CD4-positive, alpha-beta T cell (primary cell): ENCODE measurements at regions of chr4 and their contacts with region 1.

Region 1: GRCh38 chr4:140359562-140360427 is 13.7 kb upstream of the SCOC start:
- DNase-seq: peak; percentile 57 to 89 (median 71)
- ATAC-seq: peak; percentile 94
- H3K4me3 ChIP-seq: no peak overlapping the region
- H3K4me3 Mint-ChIP-seq: no peak overlapping the region
- H3K27ac ChIP-seq: no peak overlapping the region
- H3K27ac Mint-ChIP-seq: no peak overlapping the region
- H3K4me1 ChIP-seq: no peaks in the 10 kb centered on the region
- H3K4me1 Mint-ChIP-seq: no peaks in the 10 kb centered on the region
- H3K27me3 ChIP-seq: no peaks in the 10 kb centered on the region
- H3K27me3 Mint-ChIP-seq: no peaks in the 10 kb centered on the region
- CTCF ChIP-seq: peak; percentile 98

Region 2: DNA sequence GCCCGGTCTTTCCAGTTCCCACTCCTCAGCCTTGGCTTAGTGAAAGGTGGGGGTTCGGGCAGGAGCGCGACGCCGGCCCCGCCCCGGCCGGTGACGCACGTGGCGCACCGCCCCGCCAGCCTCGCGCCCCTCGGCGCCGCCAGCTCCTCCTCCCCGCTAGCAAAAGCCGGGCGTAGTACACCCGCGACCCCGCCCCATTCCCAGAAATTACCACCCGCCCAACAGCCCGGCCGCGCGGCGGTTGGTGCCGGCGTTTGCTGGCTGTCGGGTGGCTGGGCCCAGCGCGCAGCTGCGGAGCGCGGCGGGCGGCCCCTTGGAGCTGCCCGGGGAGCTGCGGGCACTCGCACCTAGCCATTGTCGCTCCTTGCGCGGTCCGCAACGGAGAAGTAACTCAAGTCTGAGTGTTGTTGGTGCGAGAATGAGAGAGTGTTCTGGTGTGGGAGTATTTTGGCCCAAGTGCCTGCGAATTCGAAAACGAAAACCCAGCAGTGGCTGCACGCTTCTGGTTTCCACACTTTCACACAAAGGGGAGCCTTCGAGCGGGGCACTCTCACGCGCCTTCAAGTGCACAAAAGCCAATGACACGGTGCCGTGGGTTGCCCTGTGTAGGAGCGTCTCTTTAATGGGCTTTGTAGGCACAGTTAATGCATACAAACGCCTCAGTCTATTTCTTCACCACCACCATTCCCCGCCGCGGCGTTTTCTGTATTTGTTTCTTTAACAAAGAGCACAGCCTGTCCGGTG is 1181.8 kb before region 1 on chr4:
- CTCF ChIA-PET with region 1: no interaction called
- POLR2A ChIA-PET with region 1: no interaction called
- intact Hi-C with region 1: loop called in 1 of 2 experiments (anchors 10 kb)
- DNase-seq: peak; percentile 80 to 96 (median 90)
- ATAC-seq: peak; percentile 74
- H3K4me3 ChIP-seq: peak overlapping the region; percentile 85
- H3K4me3 Mint-ChIP-seq: peak overlapping the region; percentile 96
- H3K27ac ChIP-seq: peak overlapping the region; percentile 77 to 88
- H3K27ac Mint-ChIP-seq: peak overlapping the region; percentile 93
- H3K4me1 ChIP-seq: peaks cover 18% of the 10 kb centered on the region
- H3K4me1 Mint-ChIP-seq: peaks cover 26% of the 10 kb centered on the region
- H3K27me3 ChIP-seq: no peaks in the 10 kb centered on the region
- H3K27me3 Mint-ChIP-seq: no peaks in the 10 kb centered on the region
- CTCF ChIP-seq: no peak

Region 3: DNA sequence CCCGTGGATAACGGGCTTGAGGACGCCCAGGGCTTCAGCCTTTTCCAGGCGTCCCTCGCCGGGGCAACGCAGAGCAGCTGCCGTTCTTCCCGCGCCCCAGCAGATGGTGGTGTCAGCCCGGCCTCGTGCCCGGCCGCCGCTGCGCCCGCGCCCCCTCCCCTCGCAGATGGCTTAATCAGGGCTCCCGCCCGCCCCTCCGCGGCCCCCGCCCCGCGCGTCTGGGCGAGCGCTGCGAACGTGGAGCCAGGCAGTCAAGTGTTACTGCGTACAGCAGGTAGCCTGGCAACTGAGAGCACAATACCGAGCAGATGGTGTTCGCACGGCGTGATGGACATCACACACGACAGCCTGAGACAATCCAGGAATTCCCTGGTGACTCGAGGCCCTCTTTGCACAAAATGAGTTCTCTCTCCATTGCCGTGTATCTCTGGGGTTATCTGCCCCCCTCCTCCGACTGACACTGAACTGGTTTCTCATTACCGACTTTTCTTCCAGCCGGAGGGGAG is 624.9 kb before region 1 on chr4:
- CTCF ChIA-PET with region 1: no interaction called
- POLR2A ChIA-PET with region 1: no interaction called
- intact Hi-C with region 1: loop called in 1 of 2 experiments (anchors 10 kb)
- DNase-seq: peak; percentile 6 to 78 (median 40)
- ATAC-seq: peak; percentile 83
- H3K4me3 ChIP-seq: peak overlapping the region; percentile 44
- H3K4me3 Mint-ChIP-seq: peak overlapping the region; percentile 69
- H3K27ac ChIP-seq: no peak overlapping the region
- H3K27ac Mint-ChIP-seq: no peak overlapping the region
- H3K4me1 ChIP-seq: peaks cover 13% of the 10 kb centered on the region
- H3K4me1 Mint-ChIP-seq: peaks cover 14% of the 10 kb centered on the region
- H3K27me3 ChIP-seq: peaks cover 12 to 35% of the 10 kb centered on the region in 2 experiments
- H3K27me3 Mint-ChIP-seq: peaks cover 53% of the 10 kb centered on the region
- CTCF ChIP-seq: peak; percentile 51

Region 4: GRCh38 chr4:140373328-140374129 is 13.7 kb after region 1 on chr4 and contains the start of gene SCOC:
- CTCF ChIA-PET with region 1: interaction called, 41 read pairs
- POLR2A ChIA-PET with region 1: interaction called, 24 read pairs
- intact Hi-C with region 1: no loop called
- DNase-seq: peak; percentile 90 to 98 (median 94)
- ATAC-seq: peak; percentile 95
- H3K4me3 ChIP-seq: peak within 1 kb of the TSS; percentile 94
- H3K4me3 Mint-ChIP-seq: peak within 1 kb of the TSS; percentile 87
- H3K27ac ChIP-seq: peak within 1 kb of the TSS; percentile 65 to 83
- H3K27ac Mint-ChIP-seq: no peak within 1 kb of the TSS
- H3K4me1 ChIP-seq: peaks cover 14% of the 10 kb centered on the region
- H3K4me1 Mint-ChIP-seq: peaks cover 32% of the 10 kb centered on the region
- H3K27me3 ChIP-seq: no peaks in the 10 kb centered on the region
- H3K27me3 Mint-ChIP-seq: no peaks in the 10 kb centered on the region
- CTCF ChIP-seq: no peak
- total RNA-seq, gene SCOC: 5.9 to 6.8 TPM

Region 5: GRCh38 chr4:140609548-140610425 is 250.0 kb after region 1 on chr4:
- CTCF ChIA-PET with region 1: no interaction called
- POLR2A ChIA-PET with region 1: no interaction called
- intact Hi-C with region 1: loop called in 1 of 2 experiments (anchors 2 kb)
- DNase-seq: peak in 3 of 14 experiments; percentile 24 to 43 (median 32)
- ATAC-seq: no peak
- H3K4me3 ChIP-seq: no peak overlapping the region
- H3K4me3 Mint-ChIP-seq: no peak overlapping the region
- H3K27ac ChIP-seq: no peak overlapping the region
- H3K27ac Mint-ChIP-seq: no peak overlapping the region
- H3K4me1 ChIP-seq: no peaks in the 10 kb centered on the region
- H3K4me1 Mint-ChIP-seq: no peaks in the 10 kb centered on the region
- H3K27me3 ChIP-seq: peaks cover 0 to 3% of the 10 kb centered on the region in 2 experiments
- H3K27me3 Mint-ChIP-seq: peaks cover 8% of the 10 kb centered on the region
- CTCF ChIP-seq: peak; percentile 49

Region 6: GRCh38 chr4:140846736-140847135 is 486.9 kb after region 1 on chr4:
- CTCF ChIA-PET with region 1: no interaction called
- POLR2A ChIA-PET with region 1: no interaction called
- intact Hi-C with region 1: loop called in 1 of 2 experiments (anchors 5 kb)
- DNase-seq: no peak
- ATAC-seq: no peak
- H3K4me3 ChIP-seq: no peak overlapping the region
- H3K4me3 Mint-ChIP-seq: no peak overlapping the region
- H3K27ac ChIP-seq: no peak overlapping the region
- H3K27ac Mint-ChIP-seq: no peak overlapping the region
- H3K4me1 ChIP-seq: no peaks in the 10 kb centered on the region
- H3K4me1 Mint-ChIP-seq: no peaks in the 10 kb centered on the region
- H3K27me3 ChIP-seq: peaks cover 3 to 8% of the 10 kb centered on the region in 2 experiments
- H3K27me3 Mint-ChIP-seq: peaks cover 30% of the 10 kb centered on the region
- CTCF ChIP-seq: no peak